ENCODE measurements at regions of chr1 and their contacts with region 1.

Region 1: GRCh38 chr1:167627865-167628641 is 2.0 kb upstream of the RCSD1 start:
- DNase-seq: peak; percentile 90
- H3K4me3 Mint-ChIP-seq: peak overlapping the region; percentile 92
- H3K27ac Mint-ChIP-seq: peak overlapping the region; percentile 99
- H3K4me1 Mint-ChIP-seq: peaks cover 46% of the 10 kb centered on the region
- H3K27me3 Mint-ChIP-seq: no peaks in the 10 kb centered on the region

Region 2: DNA sequence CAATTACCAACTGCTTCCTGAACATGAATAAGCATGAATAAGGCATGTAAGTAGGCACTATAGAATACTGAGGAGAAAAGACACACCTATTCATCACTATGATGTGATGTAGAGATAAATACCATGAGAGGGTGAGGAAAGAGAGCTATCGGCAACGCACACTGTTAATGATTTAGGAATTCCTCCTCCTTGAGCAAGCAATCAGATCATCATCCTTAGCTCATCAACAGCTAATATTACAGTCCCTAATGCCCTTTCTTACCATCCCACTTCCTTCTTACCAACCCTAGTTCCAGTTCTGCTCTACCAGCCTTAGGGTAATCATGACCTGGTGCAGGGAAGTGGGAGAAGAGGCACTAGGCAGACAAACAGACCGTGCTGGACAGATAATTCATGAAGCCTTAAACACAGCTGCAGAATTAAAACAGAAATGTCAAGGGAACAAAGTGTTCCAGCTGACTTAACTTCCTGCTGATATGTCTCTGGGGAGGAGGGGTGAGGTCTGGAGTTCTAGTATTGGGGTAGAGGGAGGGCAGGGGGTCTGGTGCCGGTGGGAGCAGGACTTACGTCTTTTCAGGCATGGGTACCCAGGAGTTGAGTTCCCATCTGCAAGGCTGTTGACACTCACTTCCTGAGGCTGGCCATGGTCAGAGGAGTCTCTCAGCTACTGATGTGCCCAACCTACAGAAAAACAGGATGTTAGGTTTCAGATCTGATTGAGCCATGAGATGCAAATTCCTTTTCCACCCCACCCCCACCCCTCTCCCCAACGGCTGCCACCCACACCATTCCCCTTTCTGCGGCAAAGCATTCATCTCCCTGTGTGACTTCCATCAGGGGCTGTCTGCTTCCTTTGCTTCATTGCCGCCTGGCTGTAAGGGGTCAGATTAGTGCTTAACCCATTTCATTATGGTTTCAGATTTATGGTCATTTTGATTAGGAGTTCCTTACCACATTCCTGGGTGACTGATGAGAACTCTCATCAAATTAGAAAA is 10.6 kb before region 1 on chr1:
- CTCF ChIA-PET with region 1: interaction called, 7 read pairs
- POLR2A ChIA-PET with region 1: interaction called, 23 read pairs
- intact Hi-C with region 1: loop called (anchors 1 kb)
- DNase-seq: peak; percentile 48
- H3K4me3 Mint-ChIP-seq: peak overlapping the region; percentile 69
- H3K27ac Mint-ChIP-seq: peak overlapping the region; percentile 87
- H3K4me1 Mint-ChIP-seq: peaks cover 52% of the 10 kb centered on the region
- H3K27me3 Mint-ChIP-seq: no peaks in the 10 kb centered on the region

Region 3: DNA sequence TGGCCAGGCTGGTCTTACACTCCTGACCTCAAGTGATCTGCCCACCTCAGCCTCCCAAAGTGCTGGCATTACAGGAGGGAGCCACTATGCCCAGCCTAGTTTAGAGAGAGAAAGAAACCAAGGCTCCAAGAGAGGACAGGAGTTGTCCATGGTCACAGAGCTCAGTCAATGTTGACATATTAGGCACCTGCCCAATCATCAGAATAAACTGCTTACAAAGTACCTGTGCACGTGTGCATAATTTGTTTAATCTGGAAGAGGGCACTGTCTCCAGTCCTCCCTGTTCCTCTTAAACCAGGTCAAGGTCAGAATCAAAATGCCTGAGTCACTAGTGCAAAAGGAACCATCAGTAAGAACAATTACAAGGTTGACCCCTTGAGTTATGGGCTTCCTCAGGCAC is 73.5 kb after region 1 on chr1:
- CTCF ChIA-PET with region 1: no interaction called
- POLR2A ChIA-PET with region 1: no interaction called
- intact Hi-C with region 1: no loop called
- DNase-seq: no peak
- H3K4me3 Mint-ChIP-seq: no peak overlapping the region
- H3K27ac Mint-ChIP-seq: no peak overlapping the region
- H3K4me1 Mint-ChIP-seq: peaks cover 4% of the 10 kb centered on the region
- H3K27me3 Mint-ChIP-seq: no peaks in the 10 kb centered on the region

Region 4: DNA sequence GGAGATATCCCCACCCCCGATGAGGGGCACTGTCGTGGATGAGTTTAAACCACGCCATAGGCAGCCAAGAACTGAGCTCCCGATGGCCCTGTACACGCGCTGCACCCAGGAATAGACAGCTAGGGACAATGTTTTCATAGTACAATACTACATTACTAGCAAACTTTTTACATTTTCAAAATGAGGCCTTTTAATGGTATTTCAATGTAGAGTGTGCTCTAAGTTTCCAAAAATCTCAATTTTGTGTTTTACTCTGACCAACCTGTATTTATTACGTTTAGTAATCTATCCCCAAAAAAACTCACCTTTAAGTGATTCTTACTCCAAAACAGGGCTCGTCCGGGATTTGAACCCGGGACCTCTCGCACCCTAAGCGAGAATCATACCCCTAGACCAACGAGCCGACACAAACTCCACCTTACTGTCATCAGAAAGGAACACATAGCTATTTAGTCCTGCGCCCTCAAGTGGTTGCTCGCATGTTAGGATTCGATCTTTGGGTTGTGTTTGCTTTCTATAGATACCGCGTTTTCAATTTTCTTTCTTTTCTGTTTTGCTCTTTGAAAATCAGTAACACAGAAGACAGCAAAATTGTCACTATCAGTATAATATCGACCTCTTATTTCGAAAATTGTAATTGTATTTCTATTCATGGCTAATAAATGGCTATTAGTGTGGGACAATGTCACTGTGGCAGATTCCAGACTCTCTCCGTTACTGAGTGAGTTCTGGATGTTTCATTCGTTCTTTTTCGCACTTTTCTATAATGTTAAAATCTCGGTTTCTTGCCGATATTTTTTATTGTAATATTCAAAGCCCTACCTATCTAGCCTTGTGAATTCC is 87.3 kb after region 1 on chr1:
- CTCF ChIA-PET with region 1: interaction called, 15 read pairs
- POLR2A ChIA-PET with region 1: interaction called, 4 read pairs
- intact Hi-C with region 1: loop called (anchors 1 kb)
- DNase-seq: peak; percentile 93
- H3K4me3 Mint-ChIP-seq: peak overlapping the region; percentile 80
- H3K27ac Mint-ChIP-seq: peak overlapping the region; percentile 93
- H3K4me1 Mint-ChIP-seq: peaks cover 35% of the 10 kb centered on the region
- H3K27me3 Mint-ChIP-seq: peaks cover 7% of the 10 kb centered on the region

Region 5: GRCh38 chr1:167752219-167752985 is 124.3 kb after region 1 on chr1:
- CTCF ChIA-PET with region 1: no interaction called
- POLR2A ChIA-PET with region 1: no interaction called
- intact Hi-C with region 1: no loop called
- DNase-seq: no peak
- H3K4me3 Mint-ChIP-seq: no peak overlapping the region
- H3K27ac Mint-ChIP-seq: peak overlapping the region; percentile 35
- H3K4me1 Mint-ChIP-seq: peaks cover 14% of the 10 kb centered on the region
- H3K27me3 Mint-ChIP-seq: no peaks in the 10 kb centered on the region

Region 6: GRCh38 chr1:168121401-168122011 is 493.5 kb after region 1 on chr1:
- CTCF ChIA-PET with region 1: no interaction called
- POLR2A ChIA-PET with region 1: no interaction called
- intact Hi-C with region 1: no loop called
- DNase-seq: no peak
- H3K4me3 Mint-ChIP-seq: no peak overlapping the region
- H3K27ac Mint-ChIP-seq: no peak overlapping the region
- H3K4me1 Mint-ChIP-seq: no peaks in the 10 kb centered on the region
- H3K27me3 Mint-ChIP-seq: peaks cover 29% of the 10 kb centered on the region

Measured in activated CD4-positive, alpha-beta memory T cell treated with anti-CD3 and anti-CD28 coated beads for 36 hours (primary cell).